Dendritic cell treated with granulocyte-macrophage colony-stimulating factor and Interleukin-4, amounts not matched to agents 40 ng/mL and 50 ng/mL, for 4 days (primary cell): ENCODE measurements at regions of chr21 and their contacts with region 1.

Region 1: GRCh38 chr21:33641336-33642026 is at the start of gene CRYZL1:
- H3K4me3 Mint-ChIP-seq: peak within 1 kb of the TSS; percentile 94
- H3K27ac Mint-ChIP-seq: peak within 1 kb of the TSS; percentile 86
- H3K4me1 Mint-ChIP-seq: peaks cover 33% of the 10 kb centered on the region
- H3K27me3 Mint-ChIP-seq: no peaks in the 10 kb centered on the region

Region 2: DNA sequence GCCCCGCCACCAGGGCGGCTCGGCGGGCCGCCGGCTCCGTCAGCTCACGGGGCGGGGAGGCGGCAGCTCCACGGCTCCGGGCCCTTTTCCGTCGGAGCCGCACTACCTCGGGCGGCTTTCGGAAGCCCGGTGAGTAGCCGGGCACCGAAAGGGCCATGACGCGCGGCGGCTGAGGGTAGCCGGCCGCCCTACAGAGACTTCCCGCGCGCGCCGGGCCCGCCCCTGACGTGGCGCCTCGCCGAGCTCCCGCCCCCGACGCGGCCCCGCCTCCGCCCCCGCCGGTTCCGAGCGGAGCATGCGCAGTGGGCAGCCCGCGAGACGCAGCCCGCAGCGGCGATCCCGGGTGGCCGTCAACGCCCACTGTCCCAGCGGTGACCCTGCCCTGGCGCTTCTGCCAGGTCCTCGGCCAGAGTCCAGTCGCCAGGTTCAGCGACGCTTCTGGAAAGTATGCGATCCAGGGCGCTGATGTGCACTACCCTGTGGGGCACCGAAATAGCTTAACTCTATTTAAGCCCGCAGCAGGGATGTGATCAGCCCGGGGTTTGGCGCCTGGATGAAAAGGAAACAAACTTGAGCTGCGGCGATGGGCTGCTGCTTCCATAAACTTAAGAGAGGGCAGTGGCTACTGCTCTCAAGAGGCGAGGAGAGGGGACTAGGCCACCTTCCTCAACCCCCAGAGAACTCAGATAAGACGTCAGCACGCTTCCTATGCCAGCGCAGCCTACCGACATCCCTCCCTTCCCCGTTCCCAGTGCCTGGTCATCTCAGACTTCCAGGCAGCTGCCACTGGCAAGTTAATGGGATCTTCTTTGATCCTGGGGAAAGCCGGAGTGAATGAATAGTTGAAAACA is 52.8 kb before region 1 on chr21 and contains the start of gene DONSON:
- intact Hi-C with region 1: loop called (anchors 2 kb)
- H3K4me3 Mint-ChIP-seq: peak within 1 kb of the TSS; percentile 89
- H3K27ac Mint-ChIP-seq: peak within 1 kb of the TSS; percentile 87
- H3K4me1 Mint-ChIP-seq: peaks cover 10% of the 10 kb centered on the region
- H3K27me3 Mint-ChIP-seq: peaks cover 2% of the 10 kb centered on the region

Region 3: DNA sequence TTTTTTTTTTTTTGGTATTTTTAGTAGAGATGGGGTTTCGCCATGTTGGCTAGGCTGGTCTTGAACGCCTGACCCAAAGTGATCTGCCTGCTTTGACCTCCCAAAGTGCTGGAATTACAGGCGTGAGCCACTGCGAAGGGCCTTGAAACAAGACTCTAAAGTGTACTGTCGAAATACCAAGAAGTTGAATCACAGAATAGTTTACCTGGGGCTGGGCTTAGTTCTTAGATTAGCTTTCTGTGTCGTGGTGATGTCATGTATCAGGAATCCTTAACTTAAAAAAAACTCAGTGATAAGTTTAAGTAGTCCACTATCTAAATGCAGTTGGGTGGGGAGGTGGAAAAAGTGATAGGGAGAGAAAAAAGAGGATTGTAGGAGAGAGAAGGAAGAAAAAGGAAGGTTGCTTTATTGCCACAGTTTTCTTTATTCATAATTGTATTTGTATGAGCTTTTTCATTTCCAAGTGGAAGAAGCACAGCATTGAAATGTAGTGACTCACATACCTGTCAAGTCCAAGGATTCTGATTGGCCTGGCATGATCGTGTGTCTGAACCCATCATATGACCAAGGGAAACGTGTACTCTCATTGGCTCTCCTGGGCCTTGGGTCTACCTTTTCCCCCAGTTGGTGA is 14.2 kb after region 1 on chr21:
- intact Hi-C with region 1: loop called (anchors 2 kb)
- H3K4me3 Mint-ChIP-seq: no peak overlapping the region
- H3K27ac Mint-ChIP-seq: peak overlapping the region; percentile 84
- H3K4me1 Mint-ChIP-seq: peaks cover 64% of the 10 kb centered on the region
- H3K27me3 Mint-ChIP-seq: no peaks in the 10 kb centered on the region

Region 4: GRCh38 chr21:33666153-33666552 is 24.7 kb after region 1 on chr21:
- intact Hi-C with region 1: no loop called
- H3K4me3 Mint-ChIP-seq: no peak overlapping the region
- H3K27ac Mint-ChIP-seq: no peak overlapping the region
- H3K4me1 Mint-ChIP-seq: peaks cover 31% of the 10 kb centered on the region
- H3K27me3 Mint-ChIP-seq: no peaks in the 10 kb centered on the region

Region 5: DNA sequence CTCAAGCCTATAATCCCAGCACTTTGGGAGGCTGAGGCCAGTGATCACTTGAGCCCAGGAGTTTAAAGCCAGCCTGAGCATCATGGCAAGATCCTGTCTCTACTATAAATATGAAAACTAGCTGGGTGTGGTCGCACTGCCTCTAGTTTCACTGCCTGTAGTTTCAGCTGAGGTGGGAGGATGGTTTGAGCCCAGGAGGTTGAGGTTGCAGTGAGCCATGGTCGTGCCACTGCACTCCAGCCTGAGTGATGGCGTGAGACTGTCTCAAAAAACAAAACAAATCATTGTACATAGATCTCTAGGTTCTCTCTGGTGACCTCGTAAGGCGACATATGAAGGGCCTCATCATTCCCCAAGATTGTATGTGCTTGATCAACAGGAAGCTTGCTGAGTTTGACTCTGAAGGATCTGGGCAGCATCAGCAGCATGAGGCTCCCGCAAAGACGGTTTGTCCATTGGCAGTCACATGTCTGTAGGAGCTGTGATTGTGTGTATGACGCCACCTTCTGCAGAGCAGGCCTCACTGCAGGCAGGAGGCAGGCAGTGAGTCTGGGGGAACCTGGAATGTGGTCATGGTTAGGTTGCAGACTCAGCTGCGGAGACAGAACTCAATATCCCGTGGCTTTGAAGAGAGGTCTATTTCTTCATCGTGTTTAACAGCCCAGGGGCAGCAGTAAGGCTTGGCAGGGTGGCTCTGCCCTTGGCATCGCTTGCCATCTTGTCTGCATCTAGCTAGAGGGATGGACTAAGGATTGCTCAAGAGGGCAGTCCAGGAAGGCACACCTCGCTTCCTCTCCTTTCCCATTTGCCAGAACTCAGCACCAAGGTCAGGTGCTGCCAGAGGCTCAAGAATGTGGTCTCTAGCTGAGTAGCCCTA is 260.2 kb after region 1 on chr21:
- intact Hi-C with region 1: loop called (anchors 5 kb)
- H3K4me3 Mint-ChIP-seq: no peak overlapping the region
- H3K27ac Mint-ChIP-seq: no peak overlapping the region
- H3K4me1 Mint-ChIP-seq: no peaks in the 10 kb centered on the region
- H3K27me3 Mint-ChIP-seq: no peaks in the 10 kb centered on the region

Region 6: DNA sequence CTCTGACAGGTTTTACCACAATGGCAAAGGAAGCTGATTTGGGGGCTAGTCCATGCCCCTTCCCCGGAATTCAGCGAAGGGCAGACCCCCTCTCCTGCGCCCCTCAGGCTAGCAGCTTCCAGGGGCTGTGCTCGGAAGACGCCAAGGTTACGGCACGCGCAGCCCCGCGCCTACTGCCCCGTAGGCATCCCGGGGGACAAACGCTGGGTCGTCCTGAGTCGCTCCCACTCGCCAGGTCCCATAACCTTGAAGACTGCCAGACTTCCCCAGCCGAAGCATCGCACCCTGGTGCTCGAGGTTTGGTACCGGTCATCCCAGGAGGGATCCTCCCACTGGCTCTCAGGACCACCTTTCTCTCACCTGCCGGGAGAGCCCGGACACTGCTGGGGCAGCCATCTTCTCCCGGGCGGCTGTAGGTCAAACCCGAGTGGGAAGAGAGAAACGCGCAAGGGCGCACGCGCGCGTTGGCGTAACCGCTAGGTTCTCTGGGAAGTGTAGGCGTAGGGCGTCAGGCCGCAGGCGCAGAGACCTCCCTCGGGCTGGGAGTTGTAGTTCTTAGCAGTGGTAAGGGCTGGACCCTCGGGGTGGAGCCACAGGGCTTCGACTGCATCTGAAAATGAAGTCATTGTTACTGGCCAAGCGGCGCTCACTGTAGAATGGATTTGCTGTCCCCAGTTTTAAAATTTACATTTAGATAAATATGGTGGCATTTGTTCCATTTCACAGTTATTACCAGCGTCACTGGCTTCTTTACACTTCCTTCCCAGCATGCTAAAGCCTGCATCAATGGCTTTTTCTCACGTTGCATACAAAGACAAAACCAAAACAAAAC is 274.1 kb after region 1 on chr21 and contains the start of gene ATP5PO:
- intact Hi-C with region 1: loop called (anchors 1 kb)
- H3K4me3 Mint-ChIP-seq: peak within 1 kb of the TSS; percentile 99
- H3K27ac Mint-ChIP-seq: peak within 1 kb of the TSS; percentile 96
- H3K4me1 Mint-ChIP-seq: peaks cover 13% of the 10 kb centered on the region
- H3K27me3 Mint-ChIP-seq: no peaks in the 10 kb centered on the region